ENCODE measurements at regions of chr6 and their contacts with region 1.

Region 1: DNA sequence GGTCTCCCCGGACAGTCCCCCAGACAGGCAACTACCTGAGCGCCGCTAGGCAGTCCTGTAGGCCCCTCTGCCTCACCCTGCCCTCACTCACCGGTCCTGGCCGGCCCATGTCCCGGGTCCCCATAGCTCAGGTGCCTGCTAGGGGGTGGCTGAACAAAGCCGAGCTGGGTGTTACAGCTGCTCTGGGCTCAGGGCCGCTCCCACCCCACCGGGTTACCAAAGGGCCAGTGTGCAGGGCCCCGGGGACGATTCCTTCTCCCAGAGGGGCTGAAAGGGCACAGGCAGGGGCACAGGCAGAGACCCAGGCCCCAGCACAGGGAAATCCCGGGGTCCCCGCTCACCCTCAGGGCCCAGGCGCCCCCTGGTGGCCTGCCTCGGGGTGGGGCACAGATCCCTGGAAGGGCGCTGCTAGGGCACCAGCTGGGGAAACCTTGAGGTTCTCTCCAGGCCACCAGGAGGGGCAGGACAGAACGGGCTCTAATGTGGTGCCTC is 118.4 kb downstream of the GRM4 start:
- DNase-seq: peak; percentile 46
- H3K4me3 Mint-ChIP-seq: no peak overlapping the region
- H3K27ac Mint-ChIP-seq: no peak overlapping the region
- H3K4me1 Mint-ChIP-seq: no peaks in the 10 kb centered on the region
- H3K27me3 Mint-ChIP-seq: peaks cover 5% of the 10 kb centered on the region

Region 2: GRCh38 chr6:33731751-33732331 is 295.6 kb before region 1 on chr6:
- intact Hi-C with region 1: no loop called
- DNase-seq: no peak
- H3K4me3 Mint-ChIP-seq: no peak overlapping the region
- H3K27ac Mint-ChIP-seq: no peak overlapping the region
- H3K4me1 Mint-ChIP-seq: no peaks in the 10 kb centered on the region
- H3K27me3 Mint-ChIP-seq: peaks cover 5% of the 10 kb centered on the region

Region 3: GRCh38 chr6:33744001-33744848 is 283.3 kb before region 1 on chr6:
- intact Hi-C with region 1: loop called (anchors 1 kb)
- DNase-seq: peak; percentile 57
- H3K4me3 Mint-ChIP-seq: no peak overlapping the region
- H3K27ac Mint-ChIP-seq: no peak overlapping the region
- H3K4me1 Mint-ChIP-seq: no peaks in the 10 kb centered on the region
- H3K27me3 Mint-ChIP-seq: peaks cover 22% of the 10 kb centered on the region

Region 4: GRCh38 chr6:33755070-33755869 is 272.2 kb before region 1 on chr6:
- intact Hi-C with region 1: no loop called
- DNase-seq: no peak
- H3K4me3 Mint-ChIP-seq: no peak overlapping the region
- H3K27ac Mint-ChIP-seq: no peak overlapping the region
- H3K4me1 Mint-ChIP-seq: no peaks in the 10 kb centered on the region
- H3K27me3 Mint-ChIP-seq: peaks cover 1% of the 10 kb centered on the region

Region 5: DNA sequence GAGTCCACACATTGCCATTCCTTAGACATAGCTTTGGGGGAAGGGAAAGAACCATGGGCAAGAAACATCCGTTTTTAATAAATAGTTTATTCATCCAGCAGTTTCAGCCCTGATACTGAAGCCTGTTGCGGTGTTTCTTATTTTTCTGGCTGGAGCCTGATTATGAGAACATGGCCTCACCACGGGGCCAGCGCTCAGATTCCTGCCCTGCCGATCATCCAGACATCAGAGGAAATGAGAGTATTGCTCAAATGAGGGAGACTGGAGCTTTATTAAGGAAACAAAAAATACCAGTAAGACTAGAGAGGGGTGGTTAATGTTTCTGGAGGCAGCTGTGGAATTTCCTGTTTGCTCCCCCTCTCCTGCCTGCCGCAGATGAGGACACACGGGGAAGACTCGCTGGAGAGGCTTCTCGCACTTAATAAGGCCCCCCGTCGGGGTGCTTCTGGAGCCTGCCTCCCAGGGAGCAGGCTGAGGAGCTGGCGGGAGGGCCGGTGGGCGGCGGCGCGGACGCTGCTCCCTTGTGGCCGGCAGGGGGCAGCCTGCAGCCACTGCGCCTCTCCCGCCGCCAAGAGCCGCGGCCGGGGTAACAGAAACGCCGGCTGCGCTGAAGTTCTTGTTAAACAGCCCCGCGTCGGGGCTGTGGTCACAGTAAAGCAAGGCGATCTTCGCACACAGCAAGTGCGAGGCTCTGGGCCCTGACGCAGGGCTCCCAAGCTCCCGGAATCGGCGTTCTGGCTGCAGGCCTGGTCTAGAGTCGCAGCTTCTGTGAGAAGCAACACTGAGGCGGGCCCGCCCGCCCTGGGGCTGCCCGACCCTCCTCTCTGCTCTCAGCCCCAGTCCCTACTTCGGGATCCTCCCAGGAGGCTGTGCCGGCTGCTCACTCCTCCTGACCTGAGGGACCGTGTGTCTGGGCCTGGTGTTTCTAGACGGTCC is 256.1 kb before region 1 on chr6:
- intact Hi-C with region 1: loop called (anchors 1 kb)
- DNase-seq: peak; percentile 38
- H3K4me3 Mint-ChIP-seq: no peak overlapping the region
- H3K27ac Mint-ChIP-seq: peak overlapping the region; percentile 13
- H3K4me1 Mint-ChIP-seq: no peaks in the 10 kb centered on the region
- H3K27me3 Mint-ChIP-seq: peaks cover 7% of the 10 kb centered on the region

Region 6: GRCh38 chr6:33851959-33852358 is 175.5 kb before region 1 on chr6:
- intact Hi-C with region 1: loop called (anchors 1 kb)
- DNase-seq: no peak
- H3K4me3 Mint-ChIP-seq: no peak overlapping the region
- H3K27ac Mint-ChIP-seq: no peak overlapping the region
- H3K4me1 Mint-ChIP-seq: peaks cover 16% of the 10 kb centered on the region
- H3K27me3 Mint-ChIP-seq: peaks cover 13% of the 10 kb centered on the region